GM13976 (cell line): ENCODE measurements at regions of chr22 and their contacts with region 1.

Region 1: GRCh38 chr22:24503137-24503842 is 8.2 kb downstream of the UPB1 start:
- DNase-seq: peak; percentile 87
- CTCF ChIP-seq: peak; percentile 57

Region 2: GRCh38 chr22:24429411-24430365 is 73.6 kb before region 1 on chr22:
- in situ Hi-C with region 1: loop called (anchors 5 kb)
- DNase-seq: peak; percentile 71
- CTCF ChIP-seq: no peak

Region 3: GRCh38 chr22:25007444-25008106 is 504.3 kb after region 1 on chr22:
- in situ Hi-C with region 1: no loop called
- DNase-seq: no peak
- CTCF ChIP-seq: no peak